ENCODE measurements at regions of chr21 and their contacts with region 1.

Region 1: DNA sequence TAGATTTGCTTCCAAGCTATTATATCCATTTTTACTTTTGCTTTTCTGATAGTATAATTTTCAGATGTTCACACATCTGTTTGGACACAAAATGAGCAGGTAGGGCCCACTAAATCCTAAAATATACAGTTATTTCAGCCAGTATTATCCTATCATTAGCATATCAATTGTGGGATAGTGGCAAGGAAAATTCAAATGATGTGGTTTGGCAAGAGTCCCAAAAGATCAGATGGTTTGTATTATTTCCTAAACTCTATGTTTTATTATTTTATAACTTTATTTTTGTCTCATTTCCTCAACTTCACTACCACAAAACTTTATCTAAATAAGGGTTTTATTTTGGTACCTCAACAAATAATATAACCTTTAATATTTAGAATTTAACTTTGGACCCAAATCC is 1659.6 kb downstream of the NCAM2 start:
- DNase-seq: no peak
- ATAC-seq: no peak
- H3K4me3 Mint-ChIP-seq: no peak overlapping the region
- H3K27ac Mint-ChIP-seq: no peak overlapping the region
- H3K4me1 Mint-ChIP-seq: no peaks in the 10 kb centered on the region
- H3K27me3 Mint-ChIP-seq: no peaks in the 10 kb centered on the region

Region 2: DNA sequence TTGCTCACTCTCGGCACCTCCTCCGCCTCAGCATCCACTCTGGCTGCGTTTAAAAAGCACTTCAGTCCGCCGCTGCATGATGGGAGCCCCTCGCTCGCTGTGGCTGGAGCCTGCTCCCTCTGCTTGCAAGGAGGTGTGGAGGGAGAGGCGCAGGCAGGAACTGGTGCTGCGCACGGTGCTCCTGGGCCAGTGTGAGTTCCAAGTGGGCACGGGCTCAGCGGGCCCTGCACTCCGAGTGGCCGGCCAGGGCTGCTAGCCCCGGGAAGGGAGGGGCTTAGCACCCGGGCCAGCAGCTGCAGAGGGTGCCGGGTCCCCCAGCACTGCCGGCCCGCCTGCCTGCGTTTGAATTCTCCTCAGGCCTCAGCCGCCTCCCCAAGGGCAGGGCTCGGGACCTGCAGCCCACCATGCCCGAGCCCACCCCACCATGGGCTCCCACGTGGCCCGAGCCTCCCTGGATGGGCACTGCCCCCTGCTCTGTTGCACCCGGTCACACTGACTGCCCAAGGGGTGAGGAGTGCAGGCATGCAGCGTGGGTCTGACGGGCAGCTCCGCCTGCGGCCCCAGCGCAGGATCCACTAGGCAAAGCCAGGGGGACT is 60.0 kb before region 1 on chr21:
- CTCF ChIA-PET with region 1: no interaction called
- POLR2A ChIA-PET with region 1: no interaction called
- intact Hi-C with region 1: loop called in 1 of 2 experiments (anchors 10 kb)
- DNase-seq: no peak
- ATAC-seq: no peak
- H3K4me3 Mint-ChIP-seq: no peak overlapping the region
- H3K27ac Mint-ChIP-seq: no peak overlapping the region
- H3K4me1 Mint-ChIP-seq: no peaks in the 10 kb centered on the region
- H3K27me3 Mint-ChIP-seq: no peaks in the 10 kb centered on the region